Aorta (tissue), 5 donors: ENCODE measurements at regions of chr4 and their contacts with region 1.

Region 1: DNA sequence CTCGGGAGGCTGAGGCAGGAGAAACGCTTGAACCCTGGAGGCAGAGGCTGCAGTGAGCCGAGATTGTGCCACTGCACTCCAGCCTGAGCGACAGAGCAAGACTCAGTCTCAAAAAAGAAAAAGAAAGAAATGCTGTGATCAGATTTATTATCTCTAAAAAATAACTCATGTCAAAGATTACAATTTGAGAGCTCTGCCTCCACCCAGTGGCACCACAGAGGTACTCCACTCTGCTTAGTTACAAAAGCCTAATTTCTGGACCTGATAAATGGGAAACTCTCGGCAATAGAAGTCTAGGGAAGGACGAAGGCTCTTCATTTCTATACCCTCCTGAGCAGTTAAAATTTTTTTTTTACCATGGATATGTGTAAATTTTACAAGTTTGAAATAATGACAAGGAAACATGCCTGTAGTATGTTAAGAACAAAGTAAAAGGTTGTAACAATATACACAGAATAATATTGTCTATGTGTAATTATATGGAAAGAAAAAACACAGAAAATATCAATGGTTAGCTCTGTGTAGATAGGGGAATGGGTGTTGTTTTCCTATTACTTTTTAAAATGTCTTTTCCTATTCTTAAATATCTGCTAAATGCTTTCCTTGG is 149.8 kb downstream of the STIM2 start:
- DNase-seq: peak; percentile 69 to 82
- ATAC-seq: peak; percentile 87
- H3K4me3 ChIP-seq: no peak overlapping the region
- H3K27ac ChIP-seq: no peak overlapping the region
- H3K4me1 ChIP-seq: no peaks in the 10 kb centered on the region
- H3K27me3 ChIP-seq: no peaks in the 10 kb centered on the region

Region 2: GRCh38 chr4:26330186-26330787 is 680.1 kb before region 1 on chr4:
- intact Hi-C with region 1: loop called in 1 of 2 experiments (anchors 10 kb)
- DNase-seq: no peak
- ATAC-seq: peak; percentile 82
- H3K4me3 ChIP-seq: no peak overlapping the region
- H3K27ac ChIP-seq: no peak overlapping the region
- H3K4me1 ChIP-seq: no peaks in the 10 kb centered on the region
- H3K27me3 ChIP-seq: no peaks in the 10 kb centered on the region

Region 3: DNA sequence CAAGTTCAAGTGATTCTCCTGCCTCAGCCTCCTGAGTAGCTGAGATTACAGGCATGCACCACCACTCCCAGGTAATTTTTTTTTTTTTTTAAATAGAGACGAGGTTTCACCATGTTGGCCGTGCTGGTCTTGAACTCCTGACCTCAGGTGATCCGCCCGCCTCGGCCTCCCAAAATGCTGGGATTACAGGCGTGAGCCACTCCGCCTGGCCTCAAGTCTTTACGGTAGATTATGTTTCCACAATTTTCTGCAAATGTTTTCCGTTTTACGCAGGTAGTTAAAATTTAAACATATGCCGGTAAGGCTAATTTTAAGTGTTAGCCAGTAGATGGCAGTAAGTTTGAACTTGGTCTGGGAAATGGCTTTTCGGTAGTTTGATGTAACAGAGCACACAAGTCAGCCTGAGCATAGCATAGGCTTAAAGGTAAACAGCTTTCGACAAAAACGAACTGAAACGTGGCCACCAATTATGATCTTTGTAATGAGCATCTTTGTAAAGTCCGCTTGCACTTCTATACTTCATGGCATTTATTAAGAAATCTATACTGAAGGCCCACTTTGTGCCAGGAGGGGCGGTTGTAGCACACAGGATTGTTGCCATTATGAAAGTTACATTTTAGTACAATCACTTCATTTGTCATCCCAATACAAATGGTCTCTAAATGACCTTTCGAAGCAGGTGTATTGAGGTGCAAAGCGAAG is 551.2 kb before region 1 on chr4:
- intact Hi-C with region 1: loop called (anchors 2 to 5 kb)
- DNase-seq: no peak
- ATAC-seq: no peak
- H3K4me3 ChIP-seq: no peak overlapping the region
- H3K27ac ChIP-seq: no peak overlapping the region
- H3K4me1 ChIP-seq: no peaks in the 10 kb centered on the region
- H3K27me3 ChIP-seq: no peaks in the 10 kb centered on the region

Region 4: GRCh38 chr4:27318743-27319142 is 308.3 kb after region 1 on chr4:
- intact Hi-C with region 1: no loop called
- DNase-seq: no peak
- ATAC-seq: peak; percentile 62
- H3K4me3 ChIP-seq: no peak overlapping the region
- H3K27ac ChIP-seq: no peak overlapping the region
- H3K4me1 ChIP-seq: peaks cover 0 to 2% of the 10 kb centered on the region in 2 donors
- H3K27me3 ChIP-seq: no peaks in the 10 kb centered on the region